Activated CD8-positive, alpha-beta T cell treated with anti-CD3 and anti-CD28 coated beads, Interleukin-2, amount 10 ng/mL, durations not matched to agents 7 days and 5 days (primary cell): ENCODE measurements at regions of chr12 and their contacts with region 1.

Region 1: DNA sequence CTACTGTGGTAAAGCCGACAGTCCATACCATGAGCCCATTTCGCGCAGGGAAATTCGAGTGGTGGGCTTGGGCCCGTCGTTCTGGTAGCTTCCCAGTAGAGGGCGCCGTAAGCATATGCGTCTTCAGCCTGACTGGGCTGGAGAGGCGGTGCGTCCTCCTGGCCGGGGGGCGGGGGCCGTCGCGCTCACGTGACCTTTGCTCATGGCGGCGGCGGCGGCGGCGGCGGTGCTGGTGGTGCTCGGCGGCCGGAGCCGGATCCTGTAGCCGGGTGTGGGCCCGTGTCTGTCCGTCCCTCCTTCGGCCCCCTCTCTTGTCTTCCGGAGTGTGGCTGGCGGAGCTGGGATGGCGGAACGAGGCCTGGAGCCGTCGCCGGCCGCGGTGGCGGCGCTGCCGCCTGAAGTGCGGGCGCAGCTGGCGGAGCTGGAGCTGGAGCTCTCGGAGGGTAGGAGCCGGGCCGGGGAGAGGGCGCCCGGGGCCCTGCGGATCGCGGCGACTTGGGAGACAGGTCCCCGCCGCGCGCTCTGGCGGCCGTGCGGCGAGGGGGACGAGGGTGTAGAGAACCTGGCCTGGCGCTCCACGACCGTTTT is at the start of gene DIP2B:
- DNase-seq: peak; percentile 97
- ATAC-seq: peak; percentile 92
- H3K4me3 Mint-ChIP-seq: peak within 1 kb of the TSS; percentile 90
- H3K27ac Mint-ChIP-seq: peak within 1 kb of the TSS; percentile 95
- H3K4me1 Mint-ChIP-seq: peaks cover 46% of the 10 kb centered on the region
- H3K27me3 Mint-ChIP-seq: no peaks in the 10 kb centered on the region
- total RNA-seq, gene DIP2B: 18.8 to 21.8 TPM

Region 2: GRCh38 chr12:50200602-50201257 is 304.2 kb before region 1 on chr12:
- CTCF ChIA-PET with region 1: no interaction called
- POLR2A ChIA-PET with region 1: no interaction called
- DNase-seq: no peak
- ATAC-seq: no peak
- H3K4me3 Mint-ChIP-seq: no peak overlapping the region
- H3K27ac Mint-ChIP-seq: no peak overlapping the region
- H3K4me1 Mint-ChIP-seq: no peaks in the 10 kb centered on the region
- H3K27me3 Mint-ChIP-seq: no peaks in the 10 kb centered on the region

Region 3: GRCh38 chr12:50467439-50467838 is 37.5 kb before region 1 on chr12:
- CTCF ChIA-PET with region 1: no interaction called
- POLR2A ChIA-PET with region 1: no interaction called
- DNase-seq: no peak
- ATAC-seq: no peak
- H3K4me3 Mint-ChIP-seq: no peak overlapping the region
- H3K27ac Mint-ChIP-seq: no peak overlapping the region
- H3K4me1 Mint-ChIP-seq: no peaks in the 10 kb centered on the region
- H3K27me3 Mint-ChIP-seq: no peaks in the 10 kb centered on the region

Region 4: DNA sequence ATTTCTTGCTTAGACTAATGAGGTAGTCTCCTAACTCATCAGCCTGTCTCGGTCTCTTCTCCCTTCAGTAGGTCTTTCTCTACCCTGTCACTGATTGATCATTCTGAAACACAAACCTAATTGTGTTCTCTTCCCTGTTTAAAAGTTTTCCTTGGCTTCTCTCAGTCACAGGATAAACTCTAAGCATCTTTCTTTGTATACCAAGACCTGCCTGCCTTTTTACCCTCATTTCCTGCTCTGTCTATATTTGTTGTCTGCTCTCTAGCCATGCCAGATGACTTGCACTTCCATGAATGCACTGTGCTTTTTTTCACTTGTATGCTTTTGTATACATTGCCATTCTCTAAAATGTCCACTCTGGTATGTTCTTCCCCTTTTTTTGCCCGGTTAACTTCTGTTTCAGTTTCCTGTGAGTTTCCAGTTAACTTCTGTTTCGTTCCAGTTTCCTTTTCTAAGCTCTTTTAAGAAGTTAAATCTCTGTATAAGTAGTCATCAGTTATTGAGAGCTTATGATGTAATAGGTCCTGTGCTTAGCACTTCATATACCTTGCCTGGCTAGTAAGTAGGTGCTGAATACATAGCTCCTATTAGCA is 12.7 kb after region 1 on chr12:
- CTCF ChIA-PET with region 1: interaction called, 67 read pairs
- POLR2A ChIA-PET with region 1: interaction called, 14 read pairs
- DNase-seq: no peak
- ATAC-seq: peak; percentile 58
- H3K4me3 Mint-ChIP-seq: no peak overlapping the region
- H3K27ac Mint-ChIP-seq: no peak overlapping the region
- H3K4me1 Mint-ChIP-seq: peaks cover 43% of the 10 kb centered on the region
- H3K27me3 Mint-ChIP-seq: no peaks in the 10 kb centered on the region

Region 5: DNA sequence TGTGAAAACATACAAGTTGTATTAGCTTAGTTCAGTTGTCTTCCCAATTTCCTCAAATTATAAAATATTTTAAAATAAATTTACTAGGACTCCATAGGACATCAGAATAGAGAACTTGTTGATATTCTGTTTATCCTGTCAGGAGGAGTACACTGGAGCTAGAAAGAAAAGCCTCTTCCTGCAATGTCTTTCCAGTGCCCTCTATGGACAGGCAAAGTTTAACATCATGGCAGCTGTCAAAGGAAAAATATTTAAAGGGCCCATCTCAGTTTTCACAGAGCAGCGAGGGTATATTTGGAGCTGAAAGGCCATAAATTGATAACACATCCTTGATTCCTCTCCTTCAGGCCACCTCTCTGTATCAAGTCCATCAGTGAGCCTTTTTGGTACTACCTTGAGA is 18.9 kb after region 1 on chr12:
- CTCF ChIA-PET with region 1: interaction called, 67 read pairs
- POLR2A ChIA-PET with region 1: interaction called, 14 read pairs
- DNase-seq: no peak
- ATAC-seq: no peak
- H3K4me3 Mint-ChIP-seq: no peak overlapping the region
- H3K27ac Mint-ChIP-seq: no peak overlapping the region
- H3K4me1 Mint-ChIP-seq: peaks cover 48% of the 10 kb centered on the region
- H3K27me3 Mint-ChIP-seq: no peaks in the 10 kb centered on the region

Region 6: DNA sequence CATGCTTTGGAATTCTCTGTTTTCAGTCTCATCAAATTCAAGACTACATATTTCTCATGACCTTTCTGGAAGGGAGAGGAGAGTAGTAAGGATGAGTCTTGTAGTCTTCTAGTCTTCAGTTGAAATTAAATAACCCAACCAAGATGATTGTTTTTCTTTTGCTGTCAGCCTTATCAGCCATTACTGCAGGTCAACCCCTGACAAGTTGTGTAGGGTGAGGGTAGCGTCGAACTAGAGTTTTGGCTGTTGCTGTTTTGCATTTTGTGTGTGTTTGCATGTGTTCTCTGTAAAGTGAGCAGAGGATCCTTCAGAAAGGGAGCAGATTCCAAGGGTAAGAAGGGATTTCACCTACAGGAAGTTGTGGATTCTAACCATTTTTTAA is 28.3 kb after region 1 on chr12:
- CTCF ChIA-PET with region 1: interaction called, 17 read pairs
- POLR2A ChIA-PET with region 1: interaction called, 29 read pairs
- DNase-seq: no peak
- ATAC-seq: peak; percentile 20
- H3K4me3 Mint-ChIP-seq: no peak overlapping the region
- H3K27ac Mint-ChIP-seq: no peak overlapping the region
- H3K4me1 Mint-ChIP-seq: peaks cover 30% of the 10 kb centered on the region
- H3K27me3 Mint-ChIP-seq: no peaks in the 10 kb centered on the region

Region 7: DNA sequence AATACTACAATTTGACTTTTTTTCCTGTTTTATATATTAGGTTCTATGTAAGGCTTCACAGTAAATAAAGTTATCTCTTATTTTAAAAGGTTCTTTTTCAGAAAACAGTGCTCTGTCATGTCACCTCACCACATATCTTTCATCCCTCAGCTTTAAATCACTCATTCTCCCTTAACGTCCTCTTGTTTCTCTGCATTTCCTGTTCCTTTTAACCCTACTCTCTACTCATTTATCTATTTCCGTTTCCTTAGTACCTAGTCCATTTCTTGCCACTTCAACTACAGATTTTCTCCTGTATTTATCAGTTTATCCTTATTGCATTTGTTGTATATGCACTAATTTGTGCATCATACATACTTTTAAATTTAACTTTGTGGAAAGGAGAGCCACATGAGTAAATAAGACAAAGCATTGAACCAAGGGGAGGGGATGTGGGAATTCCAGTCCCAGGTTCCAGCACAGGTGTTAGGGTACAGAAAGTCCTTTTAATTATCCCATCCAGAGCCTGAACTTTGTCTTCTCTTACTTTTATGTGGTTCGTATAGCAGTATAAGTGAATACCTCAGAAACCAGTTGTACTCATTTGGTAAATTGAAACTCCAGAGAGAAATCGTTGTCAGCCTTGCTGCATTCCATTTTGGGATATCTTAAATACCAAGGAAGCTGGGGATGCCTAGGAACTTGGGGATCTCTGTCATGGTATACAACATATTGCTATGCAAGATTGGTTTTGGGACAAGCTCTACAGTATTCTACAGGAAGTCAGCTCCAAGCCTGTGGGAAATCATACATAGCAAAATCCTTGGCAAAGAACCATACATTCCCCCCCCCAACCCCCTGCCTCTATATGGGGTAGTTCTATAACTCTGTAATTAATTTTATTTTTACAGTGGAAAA is 120.4 kb after region 1 on chr12:
- CTCF ChIA-PET with region 1: interaction called, 14 read pairs
- POLR2A ChIA-PET with region 1: interaction called, 8 read pairs
- DNase-seq: no peak
- ATAC-seq: peak; percentile 73
- H3K4me3 Mint-ChIP-seq: peak overlapping the region; percentile 1
- H3K27ac Mint-ChIP-seq: peak overlapping the region; percentile 70
- H3K4me1 Mint-ChIP-seq: peaks cover 40% of the 10 kb centered on the region
- H3K27me3 Mint-ChIP-seq: no peaks in the 10 kb centered on the region

Region 8: GRCh38 chr12:50637870-50638481 is 133.1 kb after region 1 on chr12:
- CTCF ChIA-PET with region 1: interaction called, 174 read pairs
- POLR2A ChIA-PET with region 1: interaction called, 12 read pairs
- DNase-seq: no peak
- ATAC-seq: no peak
- H3K4me3 Mint-ChIP-seq: no peak overlapping the region
- H3K27ac Mint-ChIP-seq: no peak overlapping the region
- H3K4me1 Mint-ChIP-seq: peaks cover 25% of the 10 kb centered on the region
- H3K27me3 Mint-ChIP-seq: no peaks in the 10 kb centered on the region